ENCODE measurements at regions of chr1 and their contacts with region 1.

Region 1: DNA sequence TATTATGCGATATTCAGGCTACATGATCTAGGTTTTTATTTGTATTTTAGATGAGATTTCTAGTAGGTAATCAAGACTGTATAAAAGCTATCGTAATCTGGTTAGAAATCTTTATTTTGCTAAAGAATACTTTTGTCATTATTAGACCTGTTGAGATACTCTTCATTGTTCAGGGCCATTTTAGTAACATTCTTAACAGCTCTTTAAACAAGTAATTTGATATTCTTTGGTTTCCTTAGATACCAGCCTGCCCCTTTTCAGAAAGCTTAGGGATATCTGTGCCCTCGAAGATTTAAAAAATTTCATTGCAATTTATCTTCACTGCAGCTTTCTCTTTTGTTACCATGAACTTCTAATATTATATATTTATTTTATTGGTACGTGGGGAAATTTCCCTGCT is 18.9 kb downstream of the ADGRL2 start:
- DNase-seq: no peak
- H3K4me3 ChIP-seq: no peak overlapping the region
- H3K27ac ChIP-seq: no peak overlapping the region
- H3K4me1 ChIP-seq: no peaks in the 10 kb centered on the region
- H3K27me3 ChIP-seq: no peaks in the 10 kb centered on the region
- CTCF ChIP-seq: no peak
- POLR2A ChIP-seq: no peak

Region 2: GRCh38 chr1:82695443-82695842 is 875.8 kb after region 1 on chr1:
- intact Hi-C with region 1: loop called (anchors 5 kb)
- DNase-seq: no peak
- H3K4me3 ChIP-seq: no peak overlapping the region
- H3K27ac ChIP-seq: no peak overlapping the region
- H3K4me1 ChIP-seq: no peaks in the 10 kb centered on the region
- H3K27me3 ChIP-seq: no peaks in the 10 kb centered on the region
- CTCF ChIP-seq: no peak
- POLR2A ChIP-seq: no peak

Measured in breast epithelium (tissue), 4 donors.